ENCODE measurements at regions of chr12 and their contacts with region 1.

Region 1: GRCh38 chr12:68236421-68237059 is 10.9 kb upstream of the IL26 start:
- DNase-seq: peak in 7 of 9 donors; percentile 58 to 78 (median 68)
- ATAC-seq: peak; percentile 84
- H3K4me3 ChIP-seq: peak overlapping the region; percentile 64
- H3K4me3 Mint-ChIP-seq: peak overlapping the region; percentile 82 to 97 (median 94)
- H3K27ac ChIP-seq: peak overlapping the region; percentile 67
- H3K27ac Mint-ChIP-seq: peak overlapping the region; percentile 88 to 99 (median 96)
- H3K4me1 ChIP-seq: peaks cover 23 to 32% of the 10 kb centered on the region in 2 donors
- H3K4me1 Mint-ChIP-seq: peaks cover 35 to 72% (median 60%) of the 10 kb centered on the region in 7 donors
- H3K27me3 ChIP-seq: no peaks in the 10 kb centered on the region
- H3K27me3 Mint-ChIP-seq: no peaks in the 10 kb centered on the region

Region 2: GRCh38 chr12:67394550-67394949 is 842.0 kb before region 1 on chr12:
- CTCF ChIA-PET with region 1: no interaction called
- POLR2A ChIA-PET with region 1: no interaction called
- intact Hi-C with region 1: no loop called
- DNase-seq: no peak
- ATAC-seq: no peak
- H3K4me3 ChIP-seq: no peak overlapping the region
- H3K4me3 Mint-ChIP-seq: no peak overlapping the region
- H3K27ac ChIP-seq: no peak overlapping the region
- H3K27ac Mint-ChIP-seq: no peak overlapping the region
- H3K4me1 ChIP-seq: no peaks in the 10 kb centered on the region
- H3K4me1 Mint-ChIP-seq: no peaks in the 10 kb centered on the region
- H3K27me3 ChIP-seq: no peaks in the 10 kb centered on the region
- H3K27me3 Mint-ChIP-seq: peaks cover 0 to 5% (median 3%) of the 10 kb centered on the region in 5 donors

Region 3: GRCh38 chr12:68175557-68176061 is 60.9 kb before region 1 on chr12:
- CTCF ChIA-PET with region 1: interaction called, 6 read pairs
- POLR2A ChIA-PET with region 1: interaction called, 5 read pairs
- intact Hi-C with region 1: loop called in 1 of 2 experiments (anchors 2 kb)
- DNase-seq: peak; percentile 35 to 90 (median 86)
- ATAC-seq: peak; percentile 93
- H3K4me3 ChIP-seq: peak overlapping the region; percentile 40
- H3K4me3 Mint-ChIP-seq: peak overlapping the region; percentile 69 to 86 (median 84)
- H3K27ac ChIP-seq: peak overlapping the region; percentile 78
- H3K27ac Mint-ChIP-seq: peak overlapping the region; percentile 87 to 97 (median 93)
- H3K4me1 ChIP-seq: peaks cover 20 to 65% of the 10 kb centered on the region in 2 donors
- H3K4me1 Mint-ChIP-seq: peaks cover 30 to 82% (median 67%) of the 10 kb centered on the region in 7 donors
- H3K27me3 ChIP-seq: no peaks in the 10 kb centered on the region
- H3K27me3 Mint-ChIP-seq: no peaks in the 10 kb centered on the region

Region 4: GRCh38 chr12:68261896-68262295 is 25.4 kb after region 1 on chr12:
- CTCF ChIA-PET with region 1: no interaction called
- POLR2A ChIA-PET with region 1: no interaction called
- intact Hi-C with region 1: loop called in 1 of 2 experiments (anchors 2 kb)
- DNase-seq: no peak
- ATAC-seq: no peak
- H3K4me3 ChIP-seq: no peak overlapping the region
- H3K4me3 Mint-ChIP-seq: no peak overlapping the region
- H3K27ac ChIP-seq: no peak overlapping the region
- H3K27ac Mint-ChIP-seq: no peak overlapping the region
- H3K4me1 ChIP-seq: peaks cover 0 to 7% of the 10 kb centered on the region in 2 donors
- H3K4me1 Mint-ChIP-seq: peaks cover 0 to 46% (median 2%) of the 10 kb centered on the region in 7 donors
- H3K27me3 ChIP-seq: no peaks in the 10 kb centered on the region
- H3K27me3 Mint-ChIP-seq: peaks cover 0 to 30% (median 6%) of the 10 kb centered on the region in 5 donors

Region 5: DNA sequence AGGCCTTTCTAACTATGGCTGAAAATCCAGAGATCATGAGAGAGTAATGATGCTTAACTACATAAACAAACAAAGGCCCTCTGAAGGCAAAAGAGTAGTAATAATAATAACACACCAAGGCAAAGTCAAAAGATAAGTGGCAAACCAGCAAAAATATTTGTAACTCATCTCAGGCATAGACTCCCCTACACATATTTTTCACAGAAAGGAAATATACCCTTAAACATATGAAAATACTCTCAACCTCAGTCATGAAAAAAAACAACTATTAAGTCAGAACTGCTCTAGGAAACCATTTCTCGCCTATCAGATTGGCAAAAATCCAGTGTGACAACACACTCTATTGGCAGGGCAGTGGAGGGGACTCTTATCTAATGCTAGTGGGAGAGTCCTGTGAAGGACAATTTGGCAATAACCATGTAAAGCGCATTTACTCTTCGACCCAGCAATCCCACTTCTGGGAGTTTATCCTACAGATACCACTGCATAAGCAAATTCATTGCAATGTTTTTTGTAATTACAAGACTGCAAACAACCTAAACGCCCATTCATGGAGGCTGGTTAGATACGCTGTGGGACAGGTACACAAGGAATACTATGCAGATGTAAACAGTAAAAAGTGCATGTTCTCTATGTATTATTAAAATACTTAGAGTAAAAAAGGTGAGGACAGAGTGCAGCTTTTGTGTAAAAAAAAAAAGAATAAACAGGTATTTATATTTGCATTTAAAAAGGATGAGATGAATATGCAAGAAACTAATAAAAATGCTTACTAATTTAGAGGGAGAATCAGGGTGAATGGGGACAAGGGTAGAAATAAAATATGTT is 42.9 kb after region 1 on chr12:
- CTCF ChIA-PET with region 1: no interaction called
- POLR2A ChIA-PET with region 1: no interaction called
- intact Hi-C with region 1: loop called in 1 of 2 experiments (anchors 2 kb)
- DNase-seq: no peak
- ATAC-seq: no peak
- H3K4me3 ChIP-seq: no peak overlapping the region
- H3K4me3 Mint-ChIP-seq: no peak overlapping the region
- H3K27ac ChIP-seq: no peak overlapping the region
- H3K27ac Mint-ChIP-seq: no peak overlapping the region
- H3K4me1 ChIP-seq: no peaks in the 10 kb centered on the region
- H3K4me1 Mint-ChIP-seq: peaks cover 0 to 53% (median 0%) of the 10 kb centered on the region in 7 donors
- H3K27me3 ChIP-seq: no peaks in the 10 kb centered on the region
- H3K27me3 Mint-ChIP-seq: peaks cover 0 to 2% (median 0%) of the 10 kb centered on the region in 5 donors

Region 6: GRCh38 chr12:68331869-68332727 is 95.6 kb after region 1 on chr12 and contains the start of gene MDM1:
- CTCF ChIA-PET with region 1: no interaction called
- POLR2A ChIA-PET with region 1: no interaction called
- intact Hi-C with region 1: loop called in 1 of 2 experiments (anchors 1 kb)
- DNase-seq: peak; percentile 85 to 96 (median 95)
- ATAC-seq: peak; percentile 98
- H3K4me3 ChIP-seq: peak within 1 kb of the TSS; percentile 68
- H3K4me3 Mint-ChIP-seq: peak within 1 kb of the TSS; percentile 85 to 93 (median 91)
- H3K27ac ChIP-seq: peak within 1 kb of the TSS; percentile 73
- H3K27ac Mint-ChIP-seq: peak within 1 kb of the TSS; percentile 78 to 93 (median 90)
- H3K4me1 ChIP-seq: peaks cover 9 to 26% of the 10 kb centered on the region in 2 donors
- H3K4me1 Mint-ChIP-seq: peaks cover 33 to 61% (median 52%) of the 10 kb centered on the region in 7 donors
- H3K27me3 ChIP-seq: no peaks in the 10 kb centered on the region
- H3K27me3 Mint-ChIP-seq: peaks cover 0 to 15% (median 0%) of the 10 kb centered on the region in 5 donors
- total RNA-seq, gene MDM1: 16.2 to 38.4 (median 23.4) TPM

Region 7: GRCh38 chr12:68745904-68746571 is 509.5 kb after region 1 on chr12 and contains the start of gene SLC35E3:
- CTCF ChIA-PET with region 1: no interaction called
- POLR2A ChIA-PET with region 1: no interaction called
- intact Hi-C with region 1: loop called in 1 of 2 experiments (anchors 10 kb)
- DNase-seq: peak; percentile 81 to 91 (median 86)
- ATAC-seq: peak; percentile 99
- H3K4me3 ChIP-seq: peak within 1 kb of the TSS; percentile 98
- H3K4me3 Mint-ChIP-seq: peak within 1 kb of the TSS; percentile 91 to 99 (median 96)
- H3K27ac ChIP-seq: peak within 1 kb of the TSS; percentile 79
- H3K27ac Mint-ChIP-seq: peak within 1 kb of the TSS; percentile 92 to 97 (median 96)
- H3K4me1 ChIP-seq: peaks cover 7 to 16% of the 10 kb centered on the region in 2 donors
- H3K4me1 Mint-ChIP-seq: peaks cover 27 to 64% (median 54%) of the 10 kb centered on the region in 7 donors
- H3K27me3 ChIP-seq: no peaks in the 10 kb centered on the region
- H3K27me3 Mint-ChIP-seq: no peaks in the 10 kb centered on the region
- total RNA-seq, gene SLC35E3: 9.0 to 12.1 (median 9.2) TPM

Measured in naive thymus-derived CD4-positive, alpha-beta T cell (primary cell).